Activated CD4-positive, alpha-beta memory T cell treated with anti-CD3 and anti-CD28 coated beads for 36 hours (primary cell): ENCODE measurements at regions of chr1 and their contacts with region 1.

Region 1: GRCh38 chr1:206489980-206490770 is 17.2 kb upstream of the RASSF5 start:
- DNase-seq: peak; percentile 84
- H3K4me3 Mint-ChIP-seq: no peak overlapping the region
- H3K27ac Mint-ChIP-seq: no peak overlapping the region
- H3K4me1 Mint-ChIP-seq: no peaks in the 10 kb centered on the region
- H3K27me3 Mint-ChIP-seq: no peaks in the 10 kb centered on the region

Region 2: DNA sequence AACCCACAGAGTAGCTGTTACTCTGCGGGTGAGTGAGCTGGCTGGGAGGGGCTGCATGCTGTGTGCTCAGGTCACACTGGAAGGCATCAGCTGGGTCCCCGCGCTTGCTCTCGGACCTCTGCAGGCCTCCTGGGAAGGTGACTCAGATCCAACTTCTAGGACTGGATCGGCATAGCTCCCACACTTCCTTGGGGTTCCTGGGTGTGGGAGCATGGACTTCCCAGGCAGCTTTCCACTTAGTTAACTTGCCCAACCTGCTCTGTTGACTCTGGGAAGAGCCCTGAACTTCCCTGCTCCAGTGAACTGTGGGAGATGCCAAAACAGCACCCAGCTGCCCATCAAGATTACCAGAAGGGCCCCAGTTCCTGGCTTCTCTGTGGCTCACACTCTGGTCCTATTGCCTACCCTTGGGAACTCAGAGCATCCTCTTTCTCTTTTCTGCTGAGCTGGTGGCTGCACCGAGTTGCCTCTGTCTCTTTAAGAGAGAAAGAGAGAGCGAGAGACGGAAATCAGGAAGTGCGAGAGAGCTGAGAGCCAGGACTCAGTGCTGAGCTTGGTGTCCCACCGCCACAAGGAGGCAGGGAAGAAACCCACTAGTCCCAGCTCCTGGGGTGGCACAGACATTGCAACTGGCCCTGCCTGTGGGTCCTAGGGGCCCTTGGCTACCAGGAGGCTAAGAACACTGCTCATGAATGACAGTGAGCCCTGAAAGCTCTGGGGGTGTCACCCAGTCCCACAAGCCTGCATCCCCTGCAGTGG is 20.1 kb before region 1 on chr1 and contains the start of gene IKBKE:
- CTCF ChIA-PET with region 1: interaction called, 16 read pairs
- POLR2A ChIA-PET with region 1: interaction called, 3 read pairs
- intact Hi-C with region 1: no loop called
- DNase-seq: peak; percentile 74
- H3K4me3 Mint-ChIP-seq: peak within 1 kb of the TSS; percentile 85
- H3K27ac Mint-ChIP-seq: peak within 1 kb of the TSS; percentile 90
- H3K4me1 Mint-ChIP-seq: peaks cover 87% of the 10 kb centered on the region
- H3K27me3 Mint-ChIP-seq: no peaks in the 10 kb centered on the region
- total RNA-seq, gene IKBKE: 18.4 to 19.4 TPM

Region 3: DNA sequence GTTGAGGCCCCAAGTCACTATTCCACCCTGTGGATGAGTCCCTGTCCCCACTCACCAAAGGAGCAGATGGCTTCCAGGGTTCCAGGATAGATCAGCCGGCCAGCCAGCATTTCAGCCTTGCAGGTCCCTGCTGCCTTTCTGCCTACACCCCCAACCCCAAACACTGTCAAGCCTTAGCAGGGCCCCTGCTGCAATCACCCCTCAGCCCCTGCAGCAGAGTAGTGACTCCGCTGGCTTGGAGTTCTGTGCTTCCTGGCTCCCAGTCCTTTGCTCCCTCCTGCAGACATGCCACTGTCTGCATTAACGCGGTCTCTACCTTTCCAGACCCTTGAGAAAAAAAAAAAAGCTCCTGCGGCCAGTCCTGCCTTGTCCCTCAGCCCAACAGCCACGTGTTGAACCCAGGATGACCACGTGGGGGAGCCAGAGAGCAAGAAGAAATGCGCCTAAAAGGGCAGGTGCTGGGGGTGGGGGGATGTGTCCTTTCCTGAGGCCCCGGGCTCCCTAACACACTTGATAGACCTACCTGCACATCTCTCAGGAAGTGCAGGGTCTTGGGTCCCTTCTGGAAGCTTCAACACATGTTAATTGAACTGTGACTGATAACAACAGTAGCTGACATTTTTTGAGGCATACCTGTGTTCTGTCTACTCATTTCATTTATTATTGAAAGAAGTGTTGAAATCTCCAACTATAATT is 54.5 kb after region 1 on chr1:
- CTCF ChIA-PET with region 1: interaction called, 36 read pairs
- POLR2A ChIA-PET with region 1: no interaction called
- intact Hi-C with region 1: no loop called
- DNase-seq: peak; percentile 88
- H3K4me3 Mint-ChIP-seq: no peak overlapping the region
- H3K27ac Mint-ChIP-seq: peak overlapping the region; percentile 42
- H3K4me1 Mint-ChIP-seq: peaks cover 17% of the 10 kb centered on the region
- H3K27me3 Mint-ChIP-seq: no peaks in the 10 kb centered on the region

Region 4: GRCh38 chr1:206635080-206635977 is 145.2 kb after region 1 on chr1 and contains the start of gene DYRK3:
- CTCF ChIA-PET with region 1: interaction called, 20 read pairs
- POLR2A ChIA-PET with region 1: no interaction called
- intact Hi-C with region 1: no loop called
- DNase-seq: peak; percentile 96
- H3K4me3 Mint-ChIP-seq: peak within 1 kb of the TSS; percentile 80
- H3K27ac Mint-ChIP-seq: peak within 1 kb of the TSS; percentile 80
- H3K4me1 Mint-ChIP-seq: peaks cover 25% of the 10 kb centered on the region
- H3K27me3 Mint-ChIP-seq: peaks cover 5% of the 10 kb centered on the region
- total RNA-seq, gene DYRK3: 10.1 to 11.4 TPM